Transverse colon (tissue), 4 donors: ENCODE measurements at regions of chr16 and their contacts with region 1.

Region 1: GRCh38 chr16:82229796-82230619 is 60.0 kb upstream of the MPHOSPH6 start:
- DNase-seq: peak; percentile 86
- H3K4me3 ChIP-seq: no peak overlapping the region
- H3K27ac ChIP-seq: no peak overlapping the region
- H3K4me1 ChIP-seq: peaks cover 0 to 9% (median 4%) of the 10 kb centered on the region in 4 donors
- H3K27me3 ChIP-seq: no peaks in the 10 kb centered on the region
- CTCF ChIP-seq: peak; percentile 89 to 94 (median 92)
- EP300 ChIP-seq: no peak
- POLR2A ChIP-seq: no peak

Region 2: GRCh38 chr16:81863630-81864352 is 366.2 kb before region 1 on chr16:
- in situ Hi-C with region 1: no loop called
- intact Hi-C with region 1: no loop called
- DNase-seq: peak; percentile 50
- H3K4me3 ChIP-seq: no peak overlapping the region
- H3K27ac ChIP-seq: peak overlapping the region in 2 of 4 donors; percentile 41 to 57
- H3K4me1 ChIP-seq: no peaks in the 10 kb centered on the region
- H3K27me3 ChIP-seq: peaks cover 19% of the 10 kb centered on the region
- CTCF ChIP-seq: no peak
- EP300 ChIP-seq: no peak
- POLR2A ChIP-seq: no peak

Region 3: DNA sequence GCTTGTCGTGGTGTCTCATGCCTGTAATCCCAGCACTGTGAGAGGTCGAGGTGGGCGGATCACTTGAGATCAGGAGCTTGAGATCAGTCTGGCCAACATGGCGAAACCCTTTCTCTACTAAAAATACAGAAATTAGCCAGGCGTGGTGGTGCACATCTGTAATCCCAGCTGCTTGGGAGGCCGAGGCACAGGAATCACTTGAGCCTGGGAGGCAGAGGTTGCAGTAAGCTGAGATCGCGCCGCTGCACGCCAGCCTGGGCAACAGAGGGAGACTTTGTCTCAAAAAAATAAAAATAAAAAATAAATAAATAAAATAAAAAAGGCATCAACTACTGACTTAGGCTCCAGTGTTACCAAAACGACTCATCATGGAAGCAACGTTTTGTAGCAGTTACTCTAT is 335.4 kb before region 1 on chr16:
- in situ Hi-C with region 1: no loop called
- intact Hi-C with region 1: loop called (anchors 2 kb)
- DNase-seq: no peak
- H3K4me3 ChIP-seq: no peak overlapping the region
- H3K27ac ChIP-seq: no peak overlapping the region
- H3K4me1 ChIP-seq: no peaks in the 10 kb centered on the region
- H3K27me3 ChIP-seq: no peaks in the 10 kb centered on the region
- CTCF ChIP-seq: no peak
- EP300 ChIP-seq: no peak
- POLR2A ChIP-seq: no peak

Region 4: DNA sequence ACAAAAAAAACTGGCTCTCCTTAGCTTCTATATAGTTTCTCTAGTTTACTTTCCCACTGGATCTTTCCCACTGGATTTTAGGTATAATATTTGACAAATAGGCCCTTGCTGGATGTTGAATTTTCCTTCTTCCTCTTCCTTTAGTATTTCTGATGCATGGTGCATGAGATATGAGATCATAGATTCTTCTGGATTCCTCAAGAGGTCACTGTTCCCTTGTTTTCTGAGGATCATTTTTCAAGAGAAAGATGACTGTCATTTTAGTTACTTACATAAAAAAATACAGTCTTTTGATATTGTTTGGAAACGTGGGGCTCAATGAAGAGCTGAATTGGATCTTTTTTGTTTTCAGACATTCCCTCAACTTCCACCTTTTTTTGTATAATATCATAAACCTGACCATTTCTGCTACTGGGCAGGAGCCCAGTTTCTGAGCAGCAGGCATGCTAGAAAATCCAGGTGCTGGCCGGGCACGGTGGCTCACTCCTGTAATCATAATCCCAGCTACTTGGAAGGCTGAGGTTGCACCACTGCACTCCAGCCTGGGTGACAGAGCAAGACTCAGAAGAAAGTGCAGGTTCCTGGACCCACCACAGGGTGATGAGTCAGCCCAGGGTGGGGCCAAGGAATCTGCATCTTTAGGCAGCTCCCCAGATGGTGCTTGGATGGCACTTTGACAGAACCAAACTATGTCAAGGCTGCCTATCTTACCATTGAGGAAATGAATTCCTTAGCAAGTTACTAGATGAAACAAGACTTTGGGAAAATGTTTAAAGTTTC is 289.0 kb before region 1 on chr16:
- in situ Hi-C with region 1: loop called (anchors 10 to 25 kb)
- intact Hi-C with region 1: no loop called
- DNase-seq: no peak
- H3K4me3 ChIP-seq: no peak overlapping the region
- H3K27ac ChIP-seq: no peak overlapping the region
- H3K4me1 ChIP-seq: no peaks in the 10 kb centered on the region
- H3K27me3 ChIP-seq: no peaks in the 10 kb centered on the region
- CTCF ChIP-seq: peak; percentile 40 to 56 (median 40)
- EP300 ChIP-seq: no peak
- POLR2A ChIP-seq: no peak

Region 5: GRCh38 chr16:82024316-82024715 is 205.7 kb before region 1 on chr16:
- in situ Hi-C with region 1: loop called in 3 of 4 experiments (anchors 5 to 25 kb)
- intact Hi-C with region 1: no loop called
- DNase-seq: no peak
- H3K4me3 ChIP-seq: no peak overlapping the region
- H3K27ac ChIP-seq: no peak overlapping the region
- H3K4me1 ChIP-seq: no peaks in the 10 kb centered on the region
- H3K27me3 ChIP-seq: no peaks in the 10 kb centered on the region
- CTCF ChIP-seq: no peak
- EP300 ChIP-seq: no peak
- POLR2A ChIP-seq: no peak

Region 6: DNA sequence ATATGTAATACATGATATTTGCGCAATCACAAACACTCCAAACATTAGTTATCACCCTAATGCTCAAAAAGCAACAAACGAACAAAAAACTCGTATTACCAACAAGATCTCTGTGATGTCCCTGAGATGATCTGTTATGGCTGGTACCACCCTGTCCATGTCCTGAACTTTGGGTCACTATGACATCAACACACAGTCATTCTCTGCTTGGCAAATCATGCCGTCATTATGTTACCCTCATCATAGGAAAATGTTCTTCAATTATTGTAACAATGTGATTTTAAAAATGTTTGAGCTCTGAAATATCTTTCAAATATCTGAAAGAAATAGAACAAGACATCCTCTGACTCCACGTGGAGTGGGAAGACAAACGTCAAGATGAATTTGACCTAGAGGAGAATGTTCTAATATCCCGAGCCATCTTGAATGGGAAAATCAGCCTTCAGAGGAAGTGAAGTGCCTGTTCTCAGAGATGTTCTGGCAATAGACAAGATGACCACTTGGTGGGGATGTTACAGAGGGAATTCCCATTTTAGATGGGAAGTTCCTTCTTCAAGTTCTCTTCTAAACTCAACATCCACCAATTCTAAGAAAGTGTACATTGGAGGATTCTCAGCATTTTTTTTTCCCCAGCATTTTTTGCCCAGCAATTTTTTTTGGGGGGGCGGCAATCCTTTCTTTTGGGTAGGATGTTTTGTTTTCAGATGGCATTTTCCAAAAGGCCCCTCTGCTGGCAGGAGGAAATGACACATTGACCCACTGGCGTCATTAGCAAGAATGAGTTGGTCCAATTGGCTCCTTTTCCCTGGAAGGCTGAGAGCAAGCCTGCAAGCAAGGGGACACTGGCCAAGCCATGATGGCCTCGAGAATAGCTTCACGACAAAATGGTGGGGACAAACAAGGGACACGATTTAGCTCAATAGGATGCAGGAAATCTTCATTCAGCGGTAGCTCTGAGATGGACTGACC is 198.6 kb before region 1 on chr16:
- in situ Hi-C with region 1: loop called in 3 of 4 experiments (anchors 5 to 25 kb)
- intact Hi-C with region 1: loop called (anchors 10 kb)
- DNase-seq: no peak
- H3K4me3 ChIP-seq: no peak overlapping the region
- H3K27ac ChIP-seq: no peak overlapping the region
- H3K4me1 ChIP-seq: peaks cover 4 to 25% (median 15%) of the 10 kb centered on the region in 4 donors
- H3K27me3 ChIP-seq: no peaks in the 10 kb centered on the region
- CTCF ChIP-seq: peak; percentile 49 to 78 (median 65)
- EP300 ChIP-seq: no peak
- POLR2A ChIP-seq: no peak